ENCODE measurements at regions of chr7 and their contacts with region 1.

Region 1: DNA sequence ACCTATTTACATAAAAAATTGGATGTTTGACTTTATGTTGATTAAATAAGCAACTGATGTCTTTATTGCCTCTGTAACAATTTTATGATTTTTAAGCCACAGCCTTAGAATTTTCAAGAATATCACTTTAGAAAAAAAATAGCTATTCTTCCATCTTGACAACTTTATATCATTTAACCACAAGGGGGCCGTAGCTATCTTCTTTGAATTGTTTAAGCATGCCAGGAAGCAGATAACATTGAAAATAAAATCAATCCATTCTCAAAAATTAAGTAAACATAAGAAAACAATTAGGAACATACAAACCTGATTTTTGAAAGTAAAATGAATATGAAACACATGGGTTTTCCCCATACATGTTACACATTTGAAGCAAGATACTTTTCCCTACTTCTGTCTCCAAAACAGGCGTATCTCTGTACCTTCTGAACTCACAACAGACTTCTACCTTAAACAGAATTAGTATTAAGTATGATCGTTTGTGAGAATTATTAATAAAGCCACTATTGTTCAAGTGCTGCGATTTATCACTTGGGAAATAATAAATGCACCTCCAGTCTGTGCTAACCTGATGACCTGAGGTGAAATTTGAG is 209.0 kb downstream of the CACNA2D1 start:
- DNase-seq: peak; percentile 61
- H3K4me3 ChIP-seq: no peak overlapping the region
- H3K27ac ChIP-seq: no peak overlapping the region
- H3K4me1 ChIP-seq: peaks cover 12% of the 10 kb centered on the region
- H3K27me3 ChIP-seq: no peaks in the 10 kb centered on the region
- CTCF ChIP-seq: peak; percentile 20 to 27
- POLR2A ChIP-seq: no peak

Region 2: GRCh38 chr7:81285142-81285871 is 949.2 kb before region 1 on chr7:
- CTCF ChIA-PET with region 1: no interaction called
- POLR2A ChIA-PET with region 1: no interaction called
- dilution Hi-C with region 1: no loop called
- intact Hi-C with region 1: no loop called
- DNase-seq: peak; percentile 45
- H3K4me3 ChIP-seq: no peak overlapping the region
- H3K27ac ChIP-seq: peak overlapping the region; percentile 33
- H3K4me1 ChIP-seq: peaks cover 6% of the 10 kb centered on the region
- H3K27me3 ChIP-seq: no peaks in the 10 kb centered on the region
- CTCF ChIP-seq: no peak
- POLR2A ChIP-seq: no peak

Region 3: GRCh38 chr7:81482600-81483186 is 751.9 kb before region 1 on chr7:
- CTCF ChIA-PET with region 1: interaction called, 10 read pairs
- POLR2A ChIA-PET with region 1: no interaction called
- dilution Hi-C with region 1: no loop called
- intact Hi-C with region 1: loop called (anchors 5 kb)
- DNase-seq: peak; percentile 40
- H3K4me3 ChIP-seq: no peak overlapping the region
- H3K27ac ChIP-seq: no peak overlapping the region
- H3K4me1 ChIP-seq: no peaks in the 10 kb centered on the region
- H3K27me3 ChIP-seq: no peaks in the 10 kb centered on the region
- CTCF ChIP-seq: peak; percentile 14 to 27
- POLR2A ChIP-seq: no peak

Region 4: DNA sequence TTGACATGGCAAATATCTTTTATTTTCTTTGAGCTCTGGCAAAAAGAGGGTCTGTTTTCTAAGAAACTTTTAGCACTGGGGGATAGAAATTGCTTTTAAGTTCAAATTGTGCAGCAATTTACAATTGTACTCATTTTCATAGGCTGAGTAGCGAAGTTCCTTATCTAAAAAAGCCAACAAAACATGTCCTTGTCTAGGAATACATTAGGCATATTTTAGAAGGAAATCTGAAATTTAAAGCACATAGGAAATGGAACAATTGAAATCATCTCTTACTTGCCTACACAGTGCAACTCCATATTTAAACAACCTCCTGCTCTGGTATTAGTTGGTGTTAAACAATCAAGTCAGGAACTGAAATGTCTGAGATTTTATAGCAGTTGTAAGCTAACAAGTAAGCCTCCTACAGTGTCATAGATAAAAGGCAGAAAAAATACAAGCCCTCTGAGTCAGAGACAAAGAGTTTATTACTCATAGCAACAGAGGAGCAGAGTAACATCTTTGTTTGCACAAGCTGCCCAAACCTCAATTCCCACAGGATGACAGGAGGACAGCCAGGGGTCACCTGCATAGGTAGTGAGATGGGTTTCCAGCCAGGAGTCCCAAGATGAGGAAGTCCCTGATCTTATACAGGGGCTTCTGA is 184.5 kb before region 1 on chr7:
- CTCF ChIA-PET with region 1: interaction called, 22 read pairs
- POLR2A ChIA-PET with region 1: no interaction called
- dilution Hi-C with region 1: no loop called
- intact Hi-C with region 1: no loop called
- DNase-seq: peak; percentile 66
- H3K4me3 ChIP-seq: no peak overlapping the region
- H3K27ac ChIP-seq: peak overlapping the region; percentile 48
- H3K4me1 ChIP-seq: peaks cover 19% of the 10 kb centered on the region
- H3K27me3 ChIP-seq: no peaks in the 10 kb centered on the region
- CTCF ChIP-seq: no peak
- POLR2A ChIP-seq: no peak

Region 5: DNA sequence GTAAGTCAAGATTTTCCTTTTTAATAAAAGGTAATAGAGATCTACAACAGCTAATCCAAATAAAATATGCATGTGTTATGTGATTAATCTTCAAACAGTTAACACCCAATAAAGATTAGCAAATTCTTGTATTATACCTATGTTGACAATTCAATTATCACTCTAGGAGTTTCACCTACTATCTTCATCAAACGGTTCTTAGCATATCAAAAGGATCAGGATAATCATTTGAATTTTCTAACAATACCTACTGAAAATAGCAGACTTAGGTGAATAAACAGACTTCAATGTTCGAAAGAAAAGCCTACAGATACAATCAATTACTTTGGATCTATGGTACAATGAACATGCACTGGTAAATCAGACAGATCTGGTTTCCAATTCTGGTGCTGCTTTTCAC is 59.2 kb before region 1 on chr7:
- CTCF ChIA-PET with region 1: no interaction called
- POLR2A ChIA-PET with region 1: no interaction called
- dilution Hi-C with region 1: no loop called
- intact Hi-C with region 1: no loop called
- DNase-seq: no peak
- H3K4me3 ChIP-seq: no peak overlapping the region
- H3K27ac ChIP-seq: no peak overlapping the region
- H3K4me1 ChIP-seq: no peaks in the 10 kb centered on the region
- H3K27me3 ChIP-seq: no peaks in the 10 kb centered on the region
- CTCF ChIP-seq: no peak
- POLR2A ChIP-seq: no peak

Region 6: GRCh38 chr7:82247814-82248433 is 13.4 kb after region 1 on chr7:
- CTCF ChIA-PET with region 1: interaction called, 11 read pairs
- POLR2A ChIA-PET with region 1: no interaction called
- dilution Hi-C with region 1: no loop called
- intact Hi-C with region 1: no loop called
- DNase-seq: no peak
- H3K4me3 ChIP-seq: no peak overlapping the region
- H3K27ac ChIP-seq: no peak overlapping the region
- H3K4me1 ChIP-seq: no peaks in the 10 kb centered on the region
- H3K27me3 ChIP-seq: no peaks in the 10 kb centered on the region
- CTCF ChIP-seq: peak; percentile 54 to 55
- POLR2A ChIP-seq: no peak

Region 7: DNA sequence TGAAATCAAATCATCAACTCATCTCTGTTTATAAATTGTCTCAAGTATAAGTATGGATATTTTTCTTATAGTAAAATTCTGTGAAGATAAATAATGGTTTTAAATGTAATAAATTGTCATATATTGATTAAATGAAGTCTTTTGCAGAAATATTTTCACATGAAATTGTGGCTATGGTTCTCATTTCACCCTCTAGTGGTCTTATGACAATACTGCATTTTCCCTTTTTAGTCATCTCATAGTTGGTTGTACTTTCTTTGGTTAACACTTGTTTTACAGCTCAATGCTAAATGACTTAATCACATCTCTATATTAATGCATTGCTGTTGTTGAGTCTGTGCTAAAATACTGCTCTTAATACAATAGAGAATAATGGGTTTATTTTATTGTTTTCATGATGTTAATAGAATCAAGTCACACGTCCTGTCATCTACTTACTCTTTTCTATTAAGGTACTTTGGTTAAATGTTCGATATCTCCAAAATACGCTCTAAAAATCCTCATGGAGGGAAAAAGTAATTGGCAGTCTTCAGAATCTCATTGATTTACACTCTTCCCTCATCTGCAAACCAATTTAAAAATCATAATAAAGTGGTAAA is 247.0 kb after region 1 on chr7:
- CTCF ChIA-PET with region 1: interaction called, 66 read pairs
- POLR2A ChIA-PET with region 1: no interaction called
- dilution Hi-C with region 1: no loop called
- intact Hi-C with region 1: loop called (anchors 1 kb)
- DNase-seq: peak; percentile 47
- H3K4me3 ChIP-seq: no peak overlapping the region
- H3K27ac ChIP-seq: no peak overlapping the region
- H3K4me1 ChIP-seq: no peaks in the 10 kb centered on the region
- H3K27me3 ChIP-seq: no peaks in the 10 kb centered on the region
- CTCF ChIP-seq: peak; percentile 33 to 55
- POLR2A ChIP-seq: no peak

Region 8: DNA sequence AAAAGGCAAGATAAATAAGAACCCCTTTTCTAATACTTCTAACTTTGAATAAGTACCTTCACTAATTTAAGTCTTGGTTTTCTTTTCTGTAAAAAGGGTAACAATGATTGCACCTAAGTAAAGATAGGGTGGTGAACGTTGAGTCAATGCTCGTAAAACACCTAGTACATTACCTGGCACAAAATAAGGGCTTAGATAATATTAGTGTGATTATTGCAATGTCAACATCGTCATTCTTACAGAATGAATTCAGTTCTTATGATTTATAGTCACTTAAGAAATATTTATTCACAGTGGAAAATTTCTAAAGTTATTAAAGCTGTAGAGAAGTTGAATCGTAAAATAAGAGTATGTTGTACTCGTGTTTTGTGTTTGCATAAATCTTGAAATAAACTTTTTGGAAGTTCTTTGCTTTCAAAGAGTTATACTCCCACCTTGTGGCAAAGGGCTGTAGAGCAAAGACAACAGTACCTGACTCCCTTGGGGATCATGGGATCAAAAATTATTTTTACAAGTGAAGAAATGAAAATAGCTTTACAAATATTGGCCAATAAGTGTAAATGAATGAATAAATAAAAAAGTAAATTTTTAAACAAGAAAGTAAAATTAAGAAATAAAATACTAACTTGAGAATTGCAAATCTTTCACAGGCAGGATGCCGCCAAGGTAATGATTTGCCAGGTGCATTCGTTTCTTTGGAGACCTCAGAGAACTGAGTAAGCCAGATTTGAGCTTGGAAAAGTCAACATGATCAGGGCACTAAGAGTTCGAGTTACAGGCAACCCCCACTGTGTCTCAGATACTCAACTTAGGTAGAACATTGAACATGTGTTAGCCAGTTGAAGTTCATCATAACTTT is 494.8 kb after region 1 on chr7:
- CTCF ChIA-PET with region 1: interaction called, 14 read pairs
- POLR2A ChIA-PET with region 1: no interaction called
- dilution Hi-C with region 1: no loop called
- intact Hi-C with region 1: loop called (anchors 2 kb)
- DNase-seq: peak; percentile 60
- H3K4me3 ChIP-seq: no peak overlapping the region
- H3K27ac ChIP-seq: no peak overlapping the region
- H3K4me1 ChIP-seq: no peaks in the 10 kb centered on the region
- H3K27me3 ChIP-seq: no peaks in the 10 kb centered on the region
- CTCF ChIP-seq: peak; percentile 48 to 62
- POLR2A ChIP-seq: no peak